CD4-positive, alpha-beta T cell (primary cell): ENCODE measurements at regions of chr2 and their contacts with region 1.

Region 1: DNA sequence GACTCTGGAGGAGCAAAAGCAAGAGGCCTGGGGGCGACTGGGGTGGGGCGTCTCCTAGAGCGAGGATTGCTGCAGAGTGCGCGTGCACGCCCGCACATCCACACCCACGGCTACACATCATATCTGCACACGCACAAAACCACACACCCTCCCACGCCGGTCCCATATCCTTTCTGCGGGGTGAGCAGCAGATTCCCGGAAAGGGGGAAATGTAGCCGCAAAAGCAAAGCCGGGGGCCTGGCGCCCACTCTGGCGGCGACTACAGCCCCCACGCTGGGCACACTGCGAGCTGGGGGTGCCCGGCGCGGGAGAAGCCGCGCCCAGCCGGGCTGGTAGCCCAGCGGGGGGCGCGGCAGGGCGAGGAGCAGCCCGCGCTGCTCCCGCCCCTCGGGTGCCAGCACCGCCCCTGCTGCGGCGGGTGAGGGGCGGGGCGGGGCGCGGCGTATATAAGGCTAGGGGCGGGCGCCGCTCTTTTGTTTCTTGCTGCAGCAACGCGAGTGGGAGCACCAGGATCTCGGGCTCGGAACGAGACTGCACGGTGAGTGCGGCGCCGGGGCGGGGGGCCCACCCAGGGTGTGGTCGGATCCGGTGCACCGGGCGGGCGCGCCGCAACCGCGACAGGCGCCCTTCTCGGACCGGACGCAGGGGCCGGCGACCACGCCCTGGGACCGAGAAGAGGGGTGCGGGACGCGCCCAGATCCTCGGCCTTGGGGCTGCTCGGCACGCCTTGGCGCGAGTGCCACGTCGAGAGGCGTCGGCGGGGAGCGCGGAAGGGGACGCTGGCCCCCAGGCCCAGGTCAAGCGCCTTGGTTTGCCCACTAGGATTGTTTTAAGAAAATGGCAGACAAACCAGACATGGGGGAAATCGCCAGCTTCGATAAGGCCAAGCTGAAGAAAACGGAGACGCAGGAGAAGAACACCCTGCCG is at the start of gene TMSB10:
- DNase-seq: peak; percentile 84 to 95 (median 92)
- ATAC-seq: peak; percentile 70
- H3K4me3 ChIP-seq: peak within 1 kb of the TSS; percentile 74
- H3K4me3 Mint-ChIP-seq: peak within 1 kb of the TSS; percentile 98
- H3K27ac ChIP-seq: peak within 1 kb of the TSS; percentile 57 to 85
- H3K27ac Mint-ChIP-seq: peak within 1 kb of the TSS; percentile 93
- H3K4me1 ChIP-seq: peaks cover 42% of the 10 kb centered on the region
- H3K4me1 Mint-ChIP-seq: peaks cover 76% of the 10 kb centered on the region
- H3K27me3 ChIP-seq: no peaks in the 10 kb centered on the region
- H3K27me3 Mint-ChIP-seq: no peaks in the 10 kb centered on the region
- CTCF ChIP-seq: no peak
- total RNA-seq, gene TMSB10: 1,969 to 2,001 TPM

Region 2: DNA sequence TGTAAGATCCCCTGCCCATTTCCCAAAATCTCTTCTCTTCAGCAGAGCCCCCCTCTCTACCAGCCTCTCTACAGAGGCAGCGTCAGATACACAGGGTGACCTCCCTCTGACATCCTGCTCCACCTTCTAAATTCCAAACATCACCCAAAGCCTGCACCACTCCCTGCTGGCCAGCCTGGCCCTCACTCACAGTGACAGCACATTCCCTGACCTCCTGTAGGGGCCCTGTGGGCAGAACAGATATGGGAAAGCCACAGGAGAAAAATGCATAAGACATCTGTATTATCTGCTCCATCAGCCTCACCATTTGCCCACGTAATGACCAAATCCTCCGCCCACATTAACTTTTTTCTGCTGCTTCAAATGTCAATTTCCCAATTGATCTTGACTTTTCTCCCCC is 65.1 kb before region 1 on chr2:
- CTCF ChIA-PET with region 1: no interaction called
- POLR2A ChIA-PET with region 1: interaction called, 37 read pairs
- intact Hi-C with region 1: no loop called
- DNase-seq: peak in 1 of 14 experiments; percentile 59
- ATAC-seq: peak; percentile 28
- H3K4me3 ChIP-seq: peak overlapping the region; percentile 22
- H3K4me3 Mint-ChIP-seq: peak overlapping the region; percentile 80
- H3K27ac ChIP-seq: peak overlapping the region; percentile 81 to 90
- H3K27ac Mint-ChIP-seq: peak overlapping the region; percentile 96
- H3K4me1 ChIP-seq: peaks cover 73% of the 10 kb centered on the region
- H3K4me1 Mint-ChIP-seq: peaks cover 91% of the 10 kb centered on the region
- H3K27me3 ChIP-seq: no peaks in the 10 kb centered on the region
- H3K27me3 Mint-ChIP-seq: no peaks in the 10 kb centered on the region
- CTCF ChIP-seq: no peak

Region 3: GRCh38 chr2:84856787-84857186 is 48.7 kb before region 1 on chr2:
- CTCF ChIA-PET with region 1: no interaction called
- POLR2A ChIA-PET with region 1: interaction called, 15 read pairs
- intact Hi-C with region 1: no loop called
- DNase-seq: peak in 5 of 14 experiments; percentile 37 to 65 (median 55)
- ATAC-seq: peak; percentile 51
- H3K4me3 ChIP-seq: no peak overlapping the region
- H3K4me3 Mint-ChIP-seq: peak overlapping the region; percentile 32
- H3K27ac ChIP-seq: peak overlapping the region; percentile 53 to 69
- H3K27ac Mint-ChIP-seq: peak overlapping the region; percentile 94
- H3K4me1 ChIP-seq: peaks cover 95% of the 10 kb centered on the region
- H3K4me1 Mint-ChIP-seq: peaks cover 96% of the 10 kb centered on the region
- H3K27me3 ChIP-seq: no peaks in the 10 kb centered on the region
- H3K27me3 Mint-ChIP-seq: no peaks in the 10 kb centered on the region
- CTCF ChIP-seq: no peak

Region 4: GRCh38 chr2:84881581-84882414 is 23.6 kb before region 1 on chr2:
- CTCF ChIA-PET with region 1: interaction called, 27 read pairs
- POLR2A ChIA-PET with region 1: interaction called, 215 read pairs
- intact Hi-C with region 1: loop called (anchors 1 to 2 kb)
- DNase-seq: peak; percentile 79 to 92 (median 86)
- ATAC-seq: peak; percentile 66
- H3K4me3 ChIP-seq: peak overlapping the region; percentile 91
- H3K4me3 Mint-ChIP-seq: peak overlapping the region; percentile 98
- H3K27ac ChIP-seq: peak overlapping the region; percentile 64 to 79
- H3K27ac Mint-ChIP-seq: peak overlapping the region; percentile 92
- H3K4me1 ChIP-seq: peaks cover 35% of the 10 kb centered on the region
- H3K4me1 Mint-ChIP-seq: peaks cover 55% of the 10 kb centered on the region
- H3K27me3 ChIP-seq: no peaks in the 10 kb centered on the region
- H3K27me3 Mint-ChIP-seq: no peaks in the 10 kb centered on the region
- CTCF ChIP-seq: peak; percentile 79

Region 5: GRCh38 chr2:84894758-84895520 is 10.5 kb before region 1 on chr2:
- CTCF ChIA-PET with region 1: interaction called, 3 read pairs
- POLR2A ChIA-PET with region 1: interaction called, 123 read pairs
- intact Hi-C with region 1: no loop called
- DNase-seq: peak in 4 of 14 experiments; percentile 57 to 64 (median 60)
- ATAC-seq: peak; percentile 74
- H3K4me3 ChIP-seq: peak overlapping the region; percentile 27
- H3K4me3 Mint-ChIP-seq: peak overlapping the region; percentile 16
- H3K27ac ChIP-seq: peak overlapping the region; percentile 59 to 76
- H3K27ac Mint-ChIP-seq: peak overlapping the region; percentile 66
- H3K4me1 ChIP-seq: peaks cover 45% of the 10 kb centered on the region
- H3K4me1 Mint-ChIP-seq: peaks cover 62% of the 10 kb centered on the region
- H3K27me3 ChIP-seq: no peaks in the 10 kb centered on the region
- H3K27me3 Mint-ChIP-seq: no peaks in the 10 kb centered on the region
- CTCF ChIP-seq: no peak

Region 6: GRCh38 chr2:84939426-84940087 is 34.1 kb after region 1 on chr2:
- CTCF ChIA-PET with region 1: no interaction called
- POLR2A ChIA-PET with region 1: interaction called, 23 read pairs
- intact Hi-C with region 1: no loop called
- DNase-seq: peak; percentile 29 to 92 (median 54)
- ATAC-seq: peak; percentile 85
- H3K4me3 ChIP-seq: peak overlapping the region; percentile 33
- H3K4me3 Mint-ChIP-seq: peak overlapping the region; percentile 66
- H3K27ac ChIP-seq: peak overlapping the region; percentile 64 to 82
- H3K27ac Mint-ChIP-seq: peak overlapping the region; percentile 89
- H3K4me1 ChIP-seq: peaks cover 29% of the 10 kb centered on the region
- H3K4me1 Mint-ChIP-seq: peaks cover 35% of the 10 kb centered on the region
- H3K27me3 ChIP-seq: no peaks in the 10 kb centered on the region
- H3K27me3 Mint-ChIP-seq: no peaks in the 10 kb centered on the region
- CTCF ChIP-seq: no peak

Region 7: DNA sequence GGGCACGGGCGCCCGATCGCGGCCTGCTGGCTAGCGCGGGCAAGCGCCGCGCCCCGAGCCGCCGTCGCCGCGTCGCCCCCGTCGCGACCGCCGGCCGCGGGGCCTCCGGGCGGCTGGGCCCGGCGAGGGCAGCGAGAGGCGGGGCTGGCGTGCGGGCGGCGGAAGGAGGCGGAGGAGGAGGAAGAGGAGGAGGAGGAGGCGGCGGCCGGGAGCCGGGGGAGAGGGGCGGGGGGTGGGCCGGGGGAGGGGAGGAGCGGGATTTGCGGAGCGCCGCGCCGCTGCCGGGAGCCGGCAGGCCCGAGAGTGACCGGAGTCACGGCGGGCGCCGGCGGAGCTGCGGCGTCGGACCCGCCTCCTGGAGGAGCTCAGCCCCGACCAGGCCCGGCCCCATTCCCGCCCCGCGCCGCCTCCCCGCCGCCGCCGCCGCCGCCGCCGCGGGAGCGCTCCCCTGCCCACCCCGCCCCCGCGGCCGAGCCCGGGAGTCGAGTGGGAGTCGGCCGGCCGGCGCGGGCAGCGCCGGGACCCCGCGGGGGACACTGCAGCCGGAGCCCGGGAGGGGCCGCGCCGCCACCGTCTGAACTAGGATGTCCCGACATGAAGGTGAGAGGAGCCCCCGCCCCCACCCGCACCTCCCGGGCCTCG is 65.5 kb after region 1 on chr2 and contains the start of gene KCMF1:
- CTCF ChIA-PET with region 1: no interaction called
- POLR2A ChIA-PET with region 1: interaction called, 42 read pairs
- intact Hi-C with region 1: no loop called
- DNase-seq: peak; percentile 44 to 82 (median 63)
- ATAC-seq: peak; percentile 49
- H3K4me3 ChIP-seq: peak within 1 kb of the TSS; percentile 99
- H3K4me3 Mint-ChIP-seq: peak within 1 kb of the TSS; percentile 99
- H3K27ac ChIP-seq: peak within 1 kb of the TSS; percentile 84 to 91
- H3K27ac Mint-ChIP-seq: peak within 1 kb of the TSS; percentile 98
- H3K4me1 ChIP-seq: peaks cover 28% of the 10 kb centered on the region
- H3K4me1 Mint-ChIP-seq: peaks cover 61% of the 10 kb centered on the region
- H3K27me3 ChIP-seq: no peaks in the 10 kb centered on the region
- H3K27me3 Mint-ChIP-seq: no peaks in the 10 kb centered on the region
- CTCF ChIP-seq: no peak
- total RNA-seq, gene KCMF1: 72.4 to 78.0 TPM

Region 8: GRCh38 chr2:85785027-85785822 is 879.8 kb after region 1 on chr2:
- CTCF ChIA-PET with region 1: no interaction called
- POLR2A ChIA-PET with region 1: no interaction called
- intact Hi-C with region 1: no loop called
- DNase-seq: peak in 2 of 14 experiments; percentile 23 to 31
- ATAC-seq: peak; percentile 17
- H3K4me3 ChIP-seq: no peak overlapping the region
- H3K4me3 Mint-ChIP-seq: no peak overlapping the region
- H3K27ac ChIP-seq: no peak overlapping the region
- H3K27ac Mint-ChIP-seq: no peak overlapping the region
- H3K4me1 ChIP-seq: no peaks in the 10 kb centered on the region
- H3K4me1 Mint-ChIP-seq: no peaks in the 10 kb centered on the region
- H3K27me3 ChIP-seq: peaks cover 0 to 3% of the 10 kb centered on the region in 2 experiments
- H3K27me3 Mint-ChIP-seq: peaks cover 4% of the 10 kb centered on the region
- CTCF ChIP-seq: no peak